HepG2 (cell line): ENCODE measurements at regions of chr3 and their contacts with region 1.

Region 1: GRCh38 chr3:140708815-140709214 is 31.0 kb downstream of the TRIM42 start:
- DNase-seq: no peak
- ATAC-seq: no peak
- H3K4me3 ChIP-seq: no peak overlapping the region
- H3K27ac ChIP-seq: no peak overlapping the region
- H3K4me1 ChIP-seq: peaks cover 61% of the 10 kb centered on the region
- H3K27me3 ChIP-seq: no peaks in the 10 kb centered on the region
- CTCF ChIP-seq: no peak
- EP300 ChIP-seq: no peak
- POLR2A ChIP-seq: no peak
- RAD21 ChIP-seq: no peak

Region 2: GRCh38 chr3:140724856-140725812 is 16.3 kb after region 1 on chr3:
- CTCF ChIA-PET with region 1: no interaction called
- POLR2A ChIA-PET with region 1: interaction called, 76 read pairs
- in situ Hi-C with region 1: no loop called
- intact Hi-C with region 1: loop called (anchors 1 kb)
- DNase-seq: no peak
- ATAC-seq: no peak
- H3K4me3 ChIP-seq: no peak overlapping the region
- H3K27ac ChIP-seq: no peak overlapping the region
- H3K4me1 ChIP-seq: peaks cover 65% of the 10 kb centered on the region
- H3K27me3 ChIP-seq: no peaks in the 10 kb centered on the region
- CTCF ChIP-seq: no peak
- EP300 ChIP-seq: no peak
- POLR2A ChIP-seq: no peak
- RAD21 ChIP-seq: no peak

Region 3: GRCh38 chr3:140896997-140897396 is 188.2 kb after region 1 on chr3:
- CTCF ChIA-PET with region 1: no interaction called
- POLR2A ChIA-PET with region 1: no interaction called
- in situ Hi-C with region 1: no loop called
- intact Hi-C with region 1: no loop called
- DNase-seq: no peak
- ATAC-seq: no peak
- H3K4me3 ChIP-seq: no peak overlapping the region
- H3K27ac ChIP-seq: no peak overlapping the region
- H3K4me1 ChIP-seq: no peaks in the 10 kb centered on the region
- H3K27me3 ChIP-seq: no peaks in the 10 kb centered on the region; a peak in 1 of 5 replicates
- CTCF ChIP-seq: no peak
- EP300 ChIP-seq: no peak
- POLR2A ChIP-seq: no peak
- RAD21 ChIP-seq: no peak

Region 4: DNA sequence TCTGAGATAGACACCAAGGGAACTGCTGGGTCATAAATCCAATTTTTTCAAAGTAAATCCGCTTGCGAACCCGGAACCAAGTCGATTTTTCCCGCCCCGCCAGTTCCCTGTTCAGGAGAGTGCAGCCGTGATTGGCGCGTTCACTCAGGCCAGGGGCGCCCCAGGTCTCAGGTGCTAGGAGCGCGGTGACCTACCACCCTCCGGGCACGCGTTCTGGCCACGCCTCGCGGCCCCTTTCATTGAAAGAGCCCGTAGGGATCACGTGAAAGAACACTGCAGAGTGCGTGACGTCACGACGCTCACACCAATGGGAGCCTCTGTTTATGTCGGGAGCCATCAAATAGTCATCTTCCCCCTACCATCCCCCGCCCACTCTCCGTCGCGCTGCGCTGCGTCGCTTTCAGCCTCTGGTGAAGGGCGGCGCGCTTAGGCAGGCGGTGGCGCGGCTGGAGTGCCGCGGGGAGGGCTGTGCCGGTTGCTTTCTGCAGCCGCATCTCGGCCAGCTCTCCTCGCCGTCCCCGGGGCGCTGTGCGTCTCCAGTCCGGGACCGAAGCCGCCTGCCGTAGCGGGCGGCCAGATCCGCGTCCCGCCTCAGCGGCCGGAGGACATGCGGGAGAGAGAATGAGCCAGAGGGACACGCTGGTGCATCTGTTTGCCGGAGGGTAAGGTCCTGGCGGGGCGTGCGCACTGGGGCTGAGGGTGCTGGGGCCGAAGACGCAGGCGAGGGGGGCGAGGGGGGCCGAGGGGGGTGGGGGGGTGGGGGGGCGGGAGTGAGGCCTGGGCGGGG is 232.8 kb after region 1 on chr3 and contains the start of gene SLC25A36:
- CTCF ChIA-PET with region 1: no interaction called
- POLR2A ChIA-PET with region 1: no interaction called
- in situ Hi-C with region 1: loop called (anchors 10 kb)
- intact Hi-C with region 1: no loop called
- DNase-seq: peak; percentile 99
- ATAC-seq: peak; percentile 96
- H3K4me3 ChIP-seq: peak within 1 kb of the TSS; percentile 96 to 100 (median 96)
- H3K27ac ChIP-seq: peak within 1 kb of the TSS; percentile 98
- H3K4me1 ChIP-seq: peaks cover 46% of the 10 kb centered on the region
- H3K27me3 ChIP-seq: no peaks in the 10 kb centered on the region; a peak in 1 of 5 replicates
- CTCF ChIP-seq: peak; percentile 55
- EP300 ChIP-seq: peak; percentile 12 to 62; a peak in 3 of 4 replicates
- POLR2A ChIP-seq: peak; percentile 90 to 94
- RAD21 ChIP-seq: peak; percentile 51; the same call in 1 of the 2 replicates
- total RNA-seq, gene SLC25A36: 30.6 and 34.6 TPM in 2 replicates